ENCODE measurements at regions of chr1 and their contacts with region 1.

Region 1: GRCh38 chr1:100277866-100278265 is 11.8 kb downstream of the RTCA start:
- DNase-seq: no peak
- H3K4me3 ChIP-seq: no peak overlapping the region
- H3K27ac ChIP-seq: no peak overlapping the region
- H3K4me1 ChIP-seq: no peaks in the 10 kb centered on the region
- H3K27me3 ChIP-seq: no peaks in the 10 kb centered on the region
- CTCF ChIP-seq: no peak
- POLR2A ChIP-seq: no peak

Region 2: DNA sequence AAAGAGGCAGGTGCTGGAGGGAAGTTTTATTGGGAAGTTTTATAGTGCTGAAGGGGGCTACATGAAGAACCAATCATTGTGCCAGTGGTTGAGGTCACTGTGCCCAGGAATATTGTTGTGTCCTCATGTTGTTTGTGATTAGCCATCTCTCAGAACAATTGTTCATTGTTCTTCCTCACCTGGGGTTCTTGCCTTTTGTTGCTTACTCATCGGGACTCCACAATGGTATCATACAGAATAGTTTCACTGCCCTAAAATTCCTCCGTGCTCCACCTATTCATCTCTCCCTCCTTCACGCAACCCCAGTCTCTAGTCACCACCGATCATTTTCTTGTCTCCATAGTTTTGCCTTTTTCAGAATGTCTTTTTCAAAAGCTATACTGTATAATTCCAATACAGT is 35.5 kb after region 1 on chr1:
- intact Hi-C with region 1: no loop called
- DNase-seq: no peak
- H3K4me3 ChIP-seq: no peak overlapping the region
- H3K27ac ChIP-seq: no peak overlapping the region
- H3K4me1 ChIP-seq: no peaks in the 10 kb centered on the region
- H3K27me3 ChIP-seq: no peaks in the 10 kb centered on the region
- CTCF ChIP-seq: no peak
- POLR2A ChIP-seq: no peak

Region 3: GRCh38 chr1:100459358-100460114 is 181.7 kb after region 1 on chr1:
- intact Hi-C with region 1: loop called (anchors 10 kb)
- DNase-seq: peak; percentile 74 to 82
- H3K4me3 ChIP-seq: no peak overlapping the region
- H3K27ac ChIP-seq: no peak overlapping the region
- H3K4me1 ChIP-seq: peaks cover 0 to 6% of the 10 kb centered on the region in 2 donors
- H3K27me3 ChIP-seq: no peaks in the 10 kb centered on the region
- CTCF ChIP-seq: peak; percentile 66 to 90 (median 83)
- POLR2A ChIP-seq: no peak

Region 4: GRCh38 chr1:100597061-100597741 is 319.3 kb after region 1 on chr1:
- intact Hi-C with region 1: no loop called
- DNase-seq: no peak
- H3K4me3 ChIP-seq: no peak overlapping the region
- H3K27ac ChIP-seq: no peak overlapping the region
- H3K4me1 ChIP-seq: no peaks in the 10 kb centered on the region
- H3K27me3 ChIP-seq: no peaks in the 10 kb centered on the region
- CTCF ChIP-seq: no peak
- POLR2A ChIP-seq: no peak